ENCODE measurements at regions of chr2 and their contacts with region 1.

Region 1: DNA sequence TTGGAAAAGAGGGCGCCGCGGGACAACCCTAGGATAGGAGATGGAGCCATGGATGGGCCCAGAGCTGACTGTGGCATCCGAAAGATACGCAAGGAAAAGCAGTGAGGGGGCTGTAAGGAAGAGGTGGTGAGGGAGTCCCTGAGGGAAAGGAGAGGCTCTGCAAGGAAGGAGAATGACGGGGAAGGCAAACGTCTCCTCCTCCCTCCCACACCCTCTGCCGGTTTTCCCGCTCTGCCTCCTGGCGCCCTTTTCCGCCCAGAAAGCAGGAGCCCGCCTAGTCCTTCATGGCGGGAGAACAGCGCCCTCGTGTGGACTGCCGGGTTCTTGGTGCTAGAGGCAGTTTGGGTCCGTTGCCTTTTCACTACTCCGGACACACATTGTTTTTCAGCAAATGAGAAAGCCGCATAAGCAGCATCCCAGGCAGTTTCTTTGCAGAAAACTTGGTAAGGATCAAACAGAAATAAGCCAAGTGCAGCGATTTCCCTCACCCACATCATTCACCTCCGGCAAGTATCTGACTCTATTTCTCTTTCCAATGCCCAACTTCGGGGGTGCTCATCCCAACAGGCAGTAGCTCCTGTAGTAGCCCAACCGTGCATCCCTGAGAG is 200.4 kb downstream of the INO80D start:
- DNase-seq: peak; percentile 91
- ATAC-seq: peak; percentile 92 to 94
- H3K4me3 ChIP-seq: no peak overlapping the region
- H3K27ac ChIP-seq: no peak overlapping the region
- H3K4me1 ChIP-seq: no peaks in the 10 kb centered on the region
- H3K27me3 ChIP-seq: no peaks in the 10 kb centered on the region
- CTCF ChIP-seq: peak; percentile 88

Region 2: GRCh38 chr2:205776139-205776538 is 109.5 kb before region 1 on chr2:
- intact Hi-C with region 1: loop called (anchors 10 kb)
- DNase-seq: peak; percentile 61
- ATAC-seq: peak; percentile 58 to 68
- H3K4me3 ChIP-seq: no peak overlapping the region
- H3K27ac ChIP-seq: no peak overlapping the region
- H3K4me1 ChIP-seq: peaks cover 20% of the 10 kb centered on the region
- H3K27me3 ChIP-seq: no peaks in the 10 kb centered on the region
- CTCF ChIP-seq: peak; percentile 63

Measured in lower lobe of right lung (tissue), 2 donors.